ENCODE measurements at regions of chr16 and their contacts with region 1.

Region 1: GRCh38 chr16:28211712-28212534 is at the start of gene XPO6:
- DNase-seq: peak; percentile 100
- ATAC-seq: peak; percentile 82
- H3K4me3 Mint-ChIP-seq: peak within 1 kb of the TSS; percentile 96
- H3K27ac Mint-ChIP-seq: peak within 1 kb of the TSS; percentile 99
- H3K4me1 Mint-ChIP-seq: peaks cover 32% of the 10 kb centered on the region
- H3K27me3 Mint-ChIP-seq: no peaks in the 10 kb centered on the region
- total RNA-seq, gene XPO6: 241 to 368 TPM

Region 2: GRCh38 chr16:28166394-28167208 is 45.3 kb before region 1 on chr16:
- CTCF ChIA-PET with region 1: no interaction called
- POLR2A ChIA-PET with region 1: interaction called, 3 read pairs
- intact Hi-C with region 1: loop called in 1 of 2 experiments (anchors 1 kb)
- DNase-seq: peak; percentile 53
- ATAC-seq: peak; percentile 92
- H3K4me3 Mint-ChIP-seq: no peak overlapping the region
- H3K27ac Mint-ChIP-seq: peak overlapping the region; percentile 67
- H3K4me1 Mint-ChIP-seq: peaks cover 83% of the 10 kb centered on the region
- H3K27me3 Mint-ChIP-seq: no peaks in the 10 kb centered on the region

Region 3: DNA sequence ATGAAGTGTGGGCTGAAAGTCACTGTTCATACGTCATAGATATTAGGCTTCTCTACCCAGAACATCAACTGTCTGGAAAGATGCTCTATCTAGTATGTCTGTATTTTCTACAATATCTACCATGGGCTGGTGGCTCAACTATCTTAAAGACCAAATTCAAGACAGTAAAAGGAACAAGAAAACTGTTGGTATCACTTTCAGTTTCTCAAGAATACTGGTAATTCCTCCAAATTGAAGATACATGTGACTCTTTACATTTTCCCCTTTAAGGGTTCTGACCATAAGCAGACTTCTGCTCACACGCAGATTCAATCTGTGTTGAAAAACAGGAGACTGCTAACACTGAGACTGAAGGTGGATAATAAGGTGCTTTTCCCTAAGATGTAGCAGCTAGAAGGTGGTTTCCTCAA is 24.3 kb before region 1 on chr16:
- CTCF ChIA-PET with region 1: interaction called, 6 read pairs
- POLR2A ChIA-PET with region 1: interaction called, 36 read pairs
- intact Hi-C with region 1: loop called (anchors 1 to 2 kb)
- DNase-seq: no peak
- ATAC-seq: peak; percentile 16
- H3K4me3 Mint-ChIP-seq: peak overlapping the region; percentile 42
- H3K27ac Mint-ChIP-seq: peak overlapping the region; percentile 89
- H3K4me1 Mint-ChIP-seq: peaks cover 92% of the 10 kb centered on the region
- H3K27me3 Mint-ChIP-seq: no peaks in the 10 kb centered on the region

Region 4: GRCh38 chr16:28291873-28292660 is 80.1 kb after region 1 on chr16 and contains the start of gene SBK1:
- CTCF ChIA-PET with region 1: no interaction called
- POLR2A ChIA-PET with region 1: no interaction called
- intact Hi-C with region 1: loop called in 1 of 2 experiments (anchors 1 kb)
- DNase-seq: peak; percentile 91
- ATAC-seq: peak; percentile 94
- H3K4me3 Mint-ChIP-seq: peak within 1 kb of the TSS; percentile 84
- H3K27ac Mint-ChIP-seq: peak within 1 kb of the TSS; percentile 93
- H3K4me1 Mint-ChIP-seq: peaks cover 51% of the 10 kb centered on the region
- H3K27me3 Mint-ChIP-seq: no peaks in the 10 kb centered on the region
- total RNA-seq, gene SBK1: 6.5 to 6.6 TPM

Region 5: DNA sequence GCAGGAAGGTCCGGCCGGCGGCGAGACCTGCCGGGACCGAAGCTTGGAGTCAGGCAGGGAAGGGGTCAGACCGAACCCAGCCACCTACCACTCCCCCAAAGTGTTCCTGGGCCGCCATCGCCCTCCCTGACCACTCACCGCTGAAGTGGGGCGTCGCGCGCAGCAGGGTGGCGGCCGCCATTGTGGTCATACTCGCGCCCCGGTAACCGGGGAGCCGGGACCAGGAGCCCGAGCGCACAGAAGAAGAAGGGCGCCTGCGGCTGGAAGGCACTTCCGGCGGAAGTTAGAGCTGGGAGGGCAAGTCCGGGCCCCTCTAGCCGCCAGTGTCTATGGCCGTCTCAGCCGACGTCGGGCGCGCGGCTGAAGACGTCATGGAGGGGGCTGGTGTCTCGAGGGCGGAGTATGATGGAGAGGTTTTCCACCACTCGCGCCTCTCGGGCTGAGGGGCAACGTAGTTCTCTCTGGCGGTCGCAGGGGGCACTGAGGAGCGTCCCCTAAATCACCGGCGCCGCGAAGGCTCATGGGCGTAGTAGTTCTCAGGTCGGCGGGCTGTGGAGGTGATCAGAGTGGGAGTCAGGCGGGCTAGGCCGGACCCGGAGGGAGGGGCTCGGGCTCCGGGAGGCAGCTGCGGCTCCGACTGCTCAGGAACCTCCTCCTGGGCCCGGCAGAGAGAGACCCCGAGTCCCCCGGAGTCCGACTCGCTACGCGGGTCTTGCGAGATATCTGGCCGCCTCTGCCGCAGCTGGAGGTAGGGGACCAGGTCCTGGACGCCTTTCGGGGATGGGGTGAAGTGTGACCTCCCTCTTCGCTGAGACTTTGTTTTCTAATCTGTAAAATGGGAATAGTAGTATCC is 634.4 kb after region 1 on chr16 and contains the start of gene TUFM:
- CTCF ChIA-PET with region 1: no interaction called
- POLR2A ChIA-PET with region 1: no interaction called
- intact Hi-C with region 1: loop called in 1 of 2 experiments (anchors 1 kb)
- DNase-seq: peak; percentile 99
- ATAC-seq: peak; percentile 94
- H3K4me3 Mint-ChIP-seq: peak within 1 kb of the TSS; percentile 97
- H3K27ac Mint-ChIP-seq: peak within 1 kb of the TSS; percentile 97
- H3K4me1 Mint-ChIP-seq: peaks cover 23% of the 10 kb centered on the region
- H3K27me3 Mint-ChIP-seq: no peaks in the 10 kb centered on the region
- total RNA-seq, gene TUFM: 224 to 241 TPM

Measured in activated CD4-positive, alpha-beta T cell treated with anti-CD3 and anti-CD28 coated beads for 36 hours (primary cell).